Caco-2 (cell line): ENCODE measurements at regions of chr11 and their contacts with region 1.

Region 1: GRCh38 chr11:117907251-117907981 is 21.8 kb downstream of the TMPRSS13 start:
- DNase-seq: peak; percentile 95 to 96
- H3K4me3 ChIP-seq: peak overlapping the region; percentile 31
- H3K4me3 Mint-ChIP-seq: peak overlapping the region; percentile 66
- H3K27ac Mint-ChIP-seq: peak overlapping the region; percentile 73
- H3K4me1 ChIP-seq: peaks cover 8% of the 10 kb centered on the region
- H3K4me1 Mint-ChIP-seq: peaks cover 14% of the 10 kb centered on the region
- H3K27me3 ChIP-seq: no peaks in the 10 kb centered on the region
- H3K27me3 Mint-ChIP-seq: no peaks in the 10 kb centered on the region
- CTCF ChIP-seq: no peak

Region 2: GRCh38 chr11:117843666-117844484 is 63.5 kb before region 1 on chr11:
- CTCF ChIA-PET with region 1: interaction called, 7 read pairs
- POLR2A ChIA-PET with region 1: no interaction called
- intact Hi-C with region 1: loop called (anchors 1 kb)
- DNase-seq: peak; percentile 81 to 89
- H3K4me3 ChIP-seq: no peak overlapping the region
- H3K4me3 Mint-ChIP-seq: no peak overlapping the region
- H3K27ac Mint-ChIP-seq: no peak overlapping the region
- H3K4me1 ChIP-seq: no peaks in the 10 kb centered on the region
- H3K4me1 Mint-ChIP-seq: no peaks in the 10 kb centered on the region
- H3K27me3 ChIP-seq: no peaks in the 10 kb centered on the region
- H3K27me3 Mint-ChIP-seq: peaks cover 2% of the 10 kb centered on the region
- CTCF ChIP-seq: peak; percentile 99 to 100

Region 3: DNA sequence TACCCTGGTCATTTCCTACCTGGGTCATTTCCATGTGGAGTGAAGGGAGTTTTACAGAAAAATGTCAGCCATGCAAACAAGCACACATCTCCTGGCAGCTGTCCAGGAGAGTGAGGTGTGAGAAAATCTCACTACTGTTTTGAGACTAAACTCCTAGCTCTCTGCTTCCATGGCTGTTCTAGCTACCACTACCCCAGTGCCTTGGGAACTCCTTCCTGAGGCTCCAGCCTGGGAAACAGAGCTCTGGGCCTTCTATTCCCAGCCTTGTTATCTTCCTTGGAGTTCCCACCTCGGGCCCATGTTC is 24.6 kb after region 1 on chr11:
- CTCF ChIA-PET with region 1: interaction called, 3 read pairs
- POLR2A ChIA-PET with region 1: interaction called, 6 read pairs
- intact Hi-C with region 1: loop called (anchors 1 kb)
- DNase-seq: peak in 1 of 2 experiments; percentile 32
- H3K4me3 ChIP-seq: no peak overlapping the region
- H3K4me3 Mint-ChIP-seq: no peak overlapping the region
- H3K27ac Mint-ChIP-seq: peak overlapping the region; percentile 99
- H3K4me1 ChIP-seq: peaks cover 51% of the 10 kb centered on the region
- H3K4me1 Mint-ChIP-seq: peaks cover 56% of the 10 kb centered on the region
- H3K27me3 ChIP-seq: no peaks in the 10 kb centered on the region
- H3K27me3 Mint-ChIP-seq: no peaks in the 10 kb centered on the region
- CTCF ChIP-seq: no peak